ENCODE measurements at regions of chr16 and their contacts with region 1.

Region 1: GRCh38 chr16:66588981-66589713 is 9.9 kb downstream of the CMTM2 start:
- DNase-seq: peak in 1 of 2 experiments; percentile 73
- H3K4me3 ChIP-seq: no peak overlapping the region
- H3K27ac ChIP-seq: no peak overlapping the region
- H3K4me1 ChIP-seq: no peaks in the 10 kb centered on the region
- H3K27me3 ChIP-seq: no peaks in the 10 kb centered on the region
- CTCF ChIP-seq: peak; percentile 89 to 99 (median 94)
- EP300 ChIP-seq: no peak
- POLR2A ChIP-seq: no peak
- RAD21 ChIP-seq: peak; percentile 93 to 94

Region 2: DNA sequence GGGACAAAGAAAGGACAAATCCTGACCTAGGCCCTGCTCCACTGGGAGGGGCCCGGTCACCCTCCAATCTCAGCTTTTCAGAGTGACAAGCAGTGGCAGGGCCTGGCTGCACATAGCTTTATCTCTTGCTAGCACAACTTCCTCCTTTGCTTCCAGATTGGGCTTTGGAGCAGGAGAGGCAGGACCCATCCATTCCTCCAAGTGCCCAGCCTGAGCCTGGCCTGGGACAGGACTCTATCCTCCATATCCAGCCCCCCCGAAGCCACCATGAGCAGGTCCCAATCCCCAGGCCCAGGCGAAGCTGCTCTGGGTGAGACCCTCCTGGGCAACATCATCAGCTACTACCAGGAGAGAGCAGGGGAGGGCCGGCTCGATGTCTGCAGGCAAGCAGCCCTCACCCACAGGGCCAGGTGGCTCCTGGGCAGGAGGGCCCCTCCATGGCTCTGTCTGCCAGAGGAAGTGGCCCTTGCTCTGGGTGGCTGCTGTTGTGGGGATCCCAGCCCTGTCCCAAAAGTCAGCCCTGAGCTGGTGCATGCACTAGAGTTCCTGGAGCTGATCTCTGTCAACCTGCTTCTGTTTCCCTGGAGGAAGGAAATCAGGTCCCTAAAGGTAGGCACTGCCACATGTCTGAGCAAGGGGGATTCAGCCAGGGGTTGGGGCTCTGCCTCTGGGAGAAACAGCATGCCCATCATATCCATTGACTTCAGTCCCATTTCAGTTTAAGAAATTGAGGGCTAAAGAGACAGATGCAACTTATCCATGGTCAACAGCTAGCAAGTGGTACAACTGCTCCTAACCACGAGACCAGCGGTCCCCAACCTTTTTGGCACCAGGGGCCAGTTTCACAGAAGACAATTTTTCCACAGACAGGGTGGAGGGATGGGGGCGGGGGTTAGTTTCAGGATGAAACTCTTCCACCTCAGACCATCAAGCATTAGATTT is 98.1 kb before region 1 on chr16:
- CTCF ChIA-PET with region 1: interaction called, 11 read pairs
- POLR2A ChIA-PET with region 1: no interaction called
- DNase-seq: no peak
- H3K4me3 ChIP-seq: no peak overlapping the region
- H3K27ac ChIP-seq: no peak overlapping the region
- H3K4me1 ChIP-seq: no peaks in the 10 kb centered on the region; a peak in 1 of 7 replicates
- H3K27me3 ChIP-seq: no peaks in the 10 kb centered on the region; a peak in 1 of 7 replicates
- CTCF ChIP-seq: no peak
- EP300 ChIP-seq: no peak
- POLR2A ChIP-seq: no peak
- RAD21 ChIP-seq: no peak

Region 3: GRCh38 chr16:66544016-66544757 is 45.0 kb before region 1 on chr16:
- CTCF ChIA-PET with region 1: interaction called, 12 read pairs
- POLR2A ChIA-PET with region 1: no interaction called
- DNase-seq: no peak
- H3K4me3 ChIP-seq: no peak overlapping the region
- H3K27ac ChIP-seq: no peak overlapping the region
- H3K4me1 ChIP-seq: peaks cover 0 to 12% (median 5%) of the 10 kb centered on the region in 4 experiments; a peak in 4 of 7 replicates
- H3K27me3 ChIP-seq: no peaks in the 10 kb centered on the region
- CTCF ChIP-seq: no peak
- EP300 ChIP-seq: no peak
- POLR2A ChIP-seq: no peak
- RAD21 ChIP-seq: no peak

Region 4: DNA sequence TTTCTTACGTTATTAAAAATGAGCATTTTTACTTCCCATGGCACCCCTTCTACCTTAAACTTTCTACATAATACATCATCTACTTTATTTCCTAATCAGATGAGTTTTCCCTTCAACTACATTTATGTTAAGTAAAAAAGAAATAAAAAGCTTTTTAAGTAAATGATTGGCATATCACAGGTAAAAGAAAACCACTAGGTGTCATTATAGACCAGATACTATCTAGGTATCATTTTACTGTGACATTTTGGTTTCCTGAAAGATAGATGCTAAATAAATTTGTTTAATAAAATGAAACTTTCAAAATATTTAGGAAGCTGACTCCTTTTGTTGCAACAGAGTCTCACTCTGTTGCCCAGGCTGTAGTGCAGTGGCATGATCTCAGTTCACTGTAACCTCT is 26.7 kb before region 1 on chr16:
- CTCF ChIA-PET with region 1: interaction called, 25 read pairs
- POLR2A ChIA-PET with region 1: no interaction called
- DNase-seq: no peak
- H3K4me3 ChIP-seq: no peak overlapping the region
- H3K27ac ChIP-seq: no peak overlapping the region
- H3K4me1 ChIP-seq: no peaks in the 10 kb centered on the region
- H3K27me3 ChIP-seq: no peaks in the 10 kb centered on the region
- CTCF ChIP-seq: no peak
- EP300 ChIP-seq: no peak
- POLR2A ChIP-seq: no peak
- RAD21 ChIP-seq: 0 out of 4 replicates have a peak, but pooled peaks of 1 of the 2 experiments have one; percentile 16

Region 5: DNA sequence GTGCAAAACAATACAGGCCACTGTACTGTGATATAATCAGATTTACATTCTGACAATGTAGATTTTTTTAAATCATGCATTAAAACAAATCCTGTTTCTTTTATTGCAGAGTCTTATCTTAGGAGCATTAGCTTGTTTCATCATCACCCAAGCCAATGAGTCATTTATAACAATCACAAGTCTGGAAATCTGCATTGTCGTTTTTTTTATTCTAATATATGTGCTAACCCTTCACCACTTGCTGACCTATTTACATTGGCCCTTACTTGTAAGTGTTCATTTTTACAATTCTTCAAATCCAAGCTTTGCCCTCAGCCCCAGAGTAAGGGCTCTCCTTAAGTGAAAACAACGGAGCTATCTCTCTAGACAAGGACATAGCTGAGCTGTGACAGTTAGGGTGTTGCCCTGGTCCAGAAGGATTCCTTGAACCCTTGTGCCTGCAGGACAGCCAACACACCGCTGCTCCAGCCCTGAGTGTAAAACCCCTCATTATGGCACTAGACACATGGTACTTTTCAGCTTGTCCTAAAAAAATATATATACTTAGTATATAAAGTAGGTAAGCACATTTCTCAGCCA is 19.2 kb before region 1 on chr16:
- CTCF ChIA-PET with region 1: interaction called, 30 read pairs
- POLR2A ChIA-PET with region 1: interaction called, 3 read pairs
- DNase-seq: no peak
- H3K4me3 ChIP-seq: no peak overlapping the region
- H3K27ac ChIP-seq: no peak overlapping the region
- H3K4me1 ChIP-seq: no peaks in the 10 kb centered on the region
- H3K27me3 ChIP-seq: no peaks in the 10 kb centered on the region; a peak in 2 of 7 replicates
- CTCF ChIP-seq: no peak
- EP300 ChIP-seq: no peak
- POLR2A ChIP-seq: no peak
- RAD21 ChIP-seq: no peak

Measured in H1 (cell line).